AG04449 (cell line): ENCODE measurements at regions of chr1 and their contacts with region 1.

Region 1: DNA sequence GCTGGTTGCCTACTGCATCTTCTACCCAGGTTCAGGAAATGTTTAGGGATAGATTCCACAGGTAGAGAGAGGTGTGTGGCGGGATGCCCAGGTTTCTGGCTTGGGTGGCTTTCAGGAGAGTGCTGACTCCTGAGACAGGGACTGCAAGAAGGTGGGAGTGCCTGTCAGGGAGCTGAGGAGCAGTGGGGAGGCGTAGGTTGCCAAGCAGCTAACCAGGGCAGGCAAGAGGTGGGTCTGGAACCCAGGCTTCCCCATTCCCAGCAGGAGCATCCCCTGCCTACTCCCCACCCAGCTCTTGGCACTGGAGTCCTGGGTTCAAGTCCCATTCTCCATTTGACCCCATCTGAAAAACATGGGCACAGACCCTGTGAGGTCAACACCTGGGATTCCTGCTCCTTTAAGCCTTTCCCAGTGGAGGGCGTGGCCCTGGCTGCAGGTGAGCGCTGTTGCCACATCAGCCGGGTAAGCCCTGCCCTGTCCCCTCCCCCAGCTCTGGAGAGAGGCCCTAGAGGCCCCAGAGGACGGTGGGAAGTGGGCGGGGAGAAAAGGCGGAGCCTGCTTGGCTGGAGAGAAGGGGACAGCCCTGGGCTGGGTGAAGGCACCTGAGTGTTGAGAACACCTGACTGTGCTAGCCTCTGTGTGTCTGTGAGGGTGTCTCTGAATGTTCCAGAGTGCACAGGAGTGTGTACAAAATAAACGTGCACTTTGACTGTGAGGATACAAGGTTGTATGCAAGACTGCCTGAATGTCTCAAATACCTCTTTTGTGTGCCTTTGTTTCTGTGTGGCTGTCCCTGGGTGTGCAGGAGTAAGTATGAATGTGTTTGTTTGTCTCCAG is 14.0 kb upstream of the SYNC start:
- DNase-seq: no peak
- H3K4me3 ChIP-seq: no peak overlapping the region
- CTCF ChIP-seq: no peak

Region 2: DNA sequence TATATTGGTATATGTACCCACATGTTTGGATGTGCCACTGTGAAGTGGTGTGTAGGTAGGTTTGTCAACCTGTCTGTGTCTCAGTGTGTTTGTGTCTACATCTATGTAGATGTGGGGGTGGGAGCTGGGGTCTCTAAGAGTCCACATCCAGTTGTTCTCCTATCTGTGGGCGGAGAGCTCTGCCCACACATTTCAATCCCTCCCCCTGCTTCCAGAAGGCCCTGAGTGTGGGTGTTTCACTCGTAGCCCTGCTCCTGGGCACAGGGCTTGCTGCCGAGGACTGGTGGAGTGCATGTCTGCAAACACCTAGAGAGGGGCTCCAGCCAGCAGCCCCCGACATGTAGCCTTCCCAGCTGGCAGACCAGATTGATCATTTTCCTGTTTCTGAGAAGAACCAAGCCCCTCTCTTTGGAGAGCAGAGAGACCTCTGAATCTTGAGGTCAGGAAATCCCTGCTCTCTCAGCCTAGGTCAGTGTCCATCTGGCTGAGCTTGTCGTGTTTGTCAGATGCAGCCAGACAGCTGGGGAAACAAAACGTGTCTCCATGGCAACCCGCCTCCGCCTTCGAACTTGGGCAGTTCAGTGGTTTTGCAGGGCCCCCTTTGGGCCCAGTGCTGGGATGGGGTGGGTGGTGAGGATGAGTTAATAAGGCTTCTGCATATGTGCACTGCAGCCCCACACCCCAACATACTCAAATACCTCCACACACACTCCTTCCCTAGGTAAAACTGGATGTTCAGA is 17.2 kb after region 1 on chr1:
- CTCF ChIA-PET with region 1: interaction called, 50 read pairs
- POLR2A ChIA-PET with region 1: no interaction called
- DNase-seq: no peak
- H3K4me3 ChIP-seq: no peak overlapping the region
- CTCF ChIP-seq: no peak

Region 3: DNA sequence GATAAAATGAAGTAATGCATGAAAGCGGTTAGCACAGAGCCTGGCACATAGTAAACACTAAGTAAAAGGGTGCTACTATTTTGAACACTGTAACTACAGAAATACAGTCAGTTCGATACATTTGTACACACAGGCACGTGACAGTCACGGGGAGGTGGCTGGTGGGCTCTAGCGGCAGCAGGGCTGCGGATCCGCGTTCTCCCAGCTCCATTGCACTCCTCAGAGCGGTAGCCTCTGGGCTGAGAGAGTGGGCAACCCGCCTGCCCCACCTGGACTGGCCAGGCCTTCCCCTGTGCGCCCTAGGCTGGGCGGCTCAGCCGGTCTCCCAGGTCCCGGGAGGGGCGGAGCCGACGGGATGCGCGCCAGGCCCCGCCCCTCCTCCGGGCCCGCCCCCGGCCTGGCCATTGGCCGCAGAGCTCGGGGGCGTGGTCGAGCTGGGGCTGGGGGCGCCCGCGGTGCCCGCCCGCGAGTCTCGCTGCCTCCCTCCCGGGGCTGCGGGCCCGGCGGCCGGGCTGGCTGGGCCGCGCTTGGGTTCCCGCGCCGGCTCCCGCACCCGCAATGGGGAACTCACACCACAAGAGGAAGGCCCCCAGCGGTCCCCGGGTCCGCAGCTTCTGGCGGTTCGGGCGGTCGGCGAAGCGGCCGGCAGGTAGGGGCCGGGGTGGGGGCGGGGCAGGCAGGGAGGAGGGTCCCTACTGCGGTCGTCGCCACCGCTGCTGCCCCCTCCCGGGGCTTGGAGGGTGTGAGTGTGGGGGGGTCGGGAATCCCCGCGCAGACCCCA is 37.2 kb after region 1 on chr1:
- CTCF ChIA-PET with region 1: interaction called, 24 read pairs
- POLR2A ChIA-PET with region 1: no interaction called
- DNase-seq: no peak
- H3K4me3 ChIP-seq: peak overlapping the region; percentile 68
- CTCF ChIP-seq: no peak

Region 4: DNA sequence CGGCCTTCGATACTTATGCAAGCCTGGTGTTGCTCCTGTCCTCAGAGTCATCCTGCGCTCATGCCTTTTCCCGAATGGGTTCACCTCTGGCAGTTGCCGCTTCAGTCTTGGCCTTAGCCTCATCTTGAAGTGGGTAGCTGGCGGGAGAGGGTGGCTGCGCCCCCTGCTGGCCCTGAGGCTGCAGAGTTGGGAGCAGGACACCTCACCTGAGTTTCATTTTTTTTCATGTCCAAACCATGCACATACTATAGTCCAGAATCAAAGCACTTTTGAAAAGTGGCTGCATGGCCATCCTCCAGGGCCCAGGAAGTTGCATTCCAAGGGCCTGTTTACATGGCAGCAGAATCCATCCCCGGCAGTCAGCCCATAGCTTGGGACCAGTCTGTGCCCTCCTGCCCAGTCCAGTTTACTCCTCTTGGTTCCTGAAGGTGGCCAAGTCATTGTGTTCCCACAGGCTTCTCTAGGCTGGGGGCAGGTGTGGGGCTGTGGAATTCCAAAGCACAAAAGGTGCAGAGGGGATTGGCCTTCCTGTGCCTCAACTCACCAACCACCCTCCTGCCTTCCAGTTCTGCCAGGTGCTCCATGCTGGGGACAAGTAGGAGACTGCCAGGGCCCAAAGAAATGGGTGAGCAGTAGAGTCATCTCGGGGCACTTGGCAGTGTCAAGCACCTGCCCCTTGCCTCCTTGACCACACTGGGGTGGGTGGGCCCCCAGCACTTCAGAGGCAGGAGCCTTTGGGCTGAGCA is 56.7 kb after region 1 on chr1:
- CTCF ChIA-PET with region 1: interaction called, 299 read pairs
- POLR2A ChIA-PET with region 1: interaction called, 13 read pairs
- DNase-seq: no peak
- H3K4me3 ChIP-seq: no peak overlapping the region
- CTCF ChIP-seq: peak; percentile 91

Region 5: GRCh38 chr1:32791881-32792280 is 75.4 kb after region 1 on chr1:
- CTCF ChIA-PET with region 1: interaction called, 11 read pairs
- POLR2A ChIA-PET with region 1: no interaction called
- DNase-seq: no peak
- H3K4me3 ChIP-seq: no peak overlapping the region
- CTCF ChIP-seq: no peak

Region 6: DNA sequence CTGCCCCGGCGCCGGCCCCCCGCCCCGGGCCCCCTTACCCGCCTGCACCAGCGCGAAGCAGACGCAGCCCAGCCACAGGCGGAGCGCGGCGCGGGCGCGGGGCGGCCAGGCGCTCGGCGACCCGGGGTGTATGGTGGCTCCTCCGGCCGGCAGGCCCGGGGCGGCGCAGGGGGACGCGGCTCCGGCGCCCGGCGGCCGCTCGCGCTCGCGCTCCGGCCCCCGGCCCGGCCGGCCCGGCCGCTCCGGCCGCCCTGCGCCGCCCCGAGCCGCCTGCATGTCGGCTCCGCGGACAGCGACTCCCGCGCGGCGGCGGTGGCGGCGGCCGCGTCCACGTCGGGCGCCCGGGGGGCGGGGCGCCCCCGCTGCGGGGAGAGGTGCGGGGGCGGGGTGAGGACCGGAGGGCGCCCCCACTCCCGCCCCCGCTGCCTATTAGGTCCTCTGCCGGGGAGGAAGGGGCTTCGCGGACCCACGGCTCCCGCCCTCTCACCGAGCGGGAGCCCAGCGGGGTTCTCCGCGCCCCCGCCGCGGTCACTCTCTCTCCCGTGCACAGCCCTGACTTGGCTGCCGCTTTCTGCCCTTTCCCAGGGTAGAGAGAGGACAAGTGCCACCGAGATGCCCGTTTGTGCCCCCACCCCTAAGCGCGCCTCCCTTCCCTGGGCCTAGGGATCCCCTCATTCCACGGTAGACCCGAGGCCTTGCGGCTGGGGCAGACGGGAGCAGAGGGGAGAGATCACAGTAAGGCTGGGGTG is 154.3 kb after region 1 on chr1 and contains the start of gene FNDC5:
- CTCF ChIA-PET with region 1: interaction called, 17 read pairs
- POLR2A ChIA-PET with region 1: no interaction called
- DNase-seq: no peak
- H3K4me3 ChIP-seq: peak within 1 kb of the TSS; percentile 54
- CTCF ChIP-seq: no peak